Activated naive CD4-positive, alpha-beta T cell treated with anti-CD3 and anti-CD28 coated beads for 36 hours (primary cell): ENCODE measurements at regions of chr19 and their contacts with region 1.

Region 1: DNA sequence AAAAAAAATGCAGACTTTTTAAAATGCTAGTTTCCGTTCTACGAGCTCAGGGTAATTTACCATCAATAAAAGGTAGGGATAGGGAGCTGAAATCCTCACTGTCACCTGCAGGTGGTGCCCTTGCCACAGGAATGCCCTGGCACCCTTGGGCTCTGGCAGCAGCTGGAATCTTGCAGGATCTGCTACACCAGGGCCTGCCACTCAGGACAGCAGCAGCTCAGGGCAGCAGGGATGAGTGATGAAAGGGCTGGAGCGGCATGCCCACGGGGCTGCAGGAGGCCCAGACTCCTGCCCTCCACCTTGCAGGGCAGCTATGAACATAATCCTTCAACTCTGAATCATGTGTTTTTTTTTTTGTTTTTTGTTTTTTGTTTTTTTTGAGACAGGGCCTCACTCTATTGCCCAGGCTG is 54.0 kb downstream of the GNG7 start:
- DNase-seq: peak; percentile 84
- H3K4me3 Mint-ChIP-seq: no peak overlapping the region
- H3K27ac Mint-ChIP-seq: no peak overlapping the region
- H3K4me1 Mint-ChIP-seq: no peaks in the 10 kb centered on the region
- H3K27me3 Mint-ChIP-seq: no peaks in the 10 kb centered on the region

Region 2: GRCh38 chr19:2543463-2544442 is 104.8 kb before region 1 on chr19:
- CTCF ChIA-PET with region 1: no interaction called
- intact Hi-C with region 1: no loop called
- DNase-seq: peak; percentile 89
- H3K4me3 Mint-ChIP-seq: peak overlapping the region; percentile 63
- H3K27ac Mint-ChIP-seq: no peak overlapping the region
- H3K4me1 Mint-ChIP-seq: peaks cover 17% of the 10 kb centered on the region
- H3K27me3 Mint-ChIP-seq: no peaks in the 10 kb centered on the region

Region 3: DNA sequence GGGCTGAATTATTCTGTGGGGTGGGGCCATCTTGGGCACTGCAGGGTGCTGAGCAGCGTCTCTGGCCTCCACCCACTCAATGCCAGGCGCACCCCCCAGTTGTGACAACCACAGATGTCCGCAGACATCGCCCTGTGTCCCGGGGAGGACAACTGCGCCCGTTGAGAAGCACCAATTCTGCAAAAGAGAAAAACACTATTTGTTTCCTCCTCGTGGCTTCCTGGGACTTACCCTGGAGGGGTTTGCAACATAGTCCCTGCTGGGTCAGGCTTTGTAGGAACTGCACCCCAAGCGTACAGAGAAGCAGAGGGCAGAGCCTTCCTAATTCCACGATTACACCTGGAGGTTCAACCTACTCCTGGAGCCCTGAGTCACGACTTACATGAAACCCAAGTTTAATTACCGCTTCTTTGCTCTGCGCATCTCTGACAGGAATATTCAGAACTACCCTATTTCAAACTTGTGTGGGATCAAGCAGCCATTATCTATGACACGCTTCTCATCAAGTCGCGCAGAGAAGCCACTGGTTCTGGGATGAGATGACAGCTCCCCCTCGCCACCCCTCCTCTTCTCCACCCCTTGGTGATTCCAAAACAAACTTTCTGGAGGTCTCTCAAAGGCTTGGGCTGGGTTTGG is 102.4 kb after region 1 on chr19:
- CTCF ChIA-PET with region 1: interaction called, 69 read pairs
- intact Hi-C with region 1: loop called (anchors 1 kb)
- DNase-seq: no peak
- H3K4me3 Mint-ChIP-seq: no peak overlapping the region
- H3K27ac Mint-ChIP-seq: no peak overlapping the region
- H3K4me1 Mint-ChIP-seq: no peaks in the 10 kb centered on the region
- H3K27me3 Mint-ChIP-seq: no peaks in the 10 kb centered on the region

Region 4: GRCh38 chr19:2798733-2799132 is 150.2 kb after region 1 on chr19:
- CTCF ChIA-PET with region 1: no interaction called
- intact Hi-C with region 1: no loop called
- DNase-seq: no peak
- H3K4me3 Mint-ChIP-seq: no peak overlapping the region
- H3K27ac Mint-ChIP-seq: no peak overlapping the region
- H3K4me1 Mint-ChIP-seq: no peaks in the 10 kb centered on the region
- H3K27me3 Mint-ChIP-seq: no peaks in the 10 kb centered on the region

Region 5: GRCh38 chr19:2867025-2867991 is 218.8 kb after region 1 on chr19 and contains the start of gene ZNF556:
- CTCF ChIA-PET with region 1: interaction called, 9 read pairs
- intact Hi-C with region 1: loop called (anchors 1 kb)
- DNase-seq: no peak
- H3K4me3 Mint-ChIP-seq: no peak within 1 kb of the TSS
- H3K27ac Mint-ChIP-seq: no peak within 1 kb of the TSS
- H3K4me1 Mint-ChIP-seq: no peaks in the 10 kb centered on the region
- H3K27me3 Mint-ChIP-seq: no peaks in the 10 kb centered on the region
- total RNA-seq, gene ZNF556: not detected